MCF 10A (cell line): ENCODE measurements at regions of chr13 and their contacts with region 1.

Region 1: DNA sequence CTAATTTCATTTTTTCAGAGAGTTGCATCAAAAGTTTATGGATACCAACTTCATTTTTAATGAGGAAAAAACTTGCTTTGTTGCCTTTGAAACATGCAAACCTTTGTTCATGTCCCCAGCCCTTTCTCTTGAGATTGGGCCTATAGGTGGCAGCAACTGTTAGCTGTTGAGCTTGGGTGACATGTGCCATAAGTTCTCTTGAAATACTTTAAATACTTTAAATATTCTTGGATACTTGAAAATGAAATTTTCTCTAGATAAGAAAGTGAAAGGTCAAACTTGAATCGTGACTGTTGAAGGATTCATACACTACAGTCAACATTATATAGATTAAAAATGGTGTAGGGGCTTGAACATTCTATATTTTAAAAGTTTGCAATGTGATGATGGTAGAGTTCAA is 294.9 kb downstream of the NDFIP2 start:
- DNase-seq: peak; percentile 58
- H3K4me3 Mint-ChIP-seq: no peak overlapping the region
- H3K27ac Mint-ChIP-seq: no peak overlapping the region
- H3K4me1 Mint-ChIP-seq: peaks cover 20% of the 10 kb centered on the region
- H3K27me3 Mint-ChIP-seq: no peaks in the 10 kb centered on the region
- CTCF ChIP-seq: peak; percentile 53

Region 2: DNA sequence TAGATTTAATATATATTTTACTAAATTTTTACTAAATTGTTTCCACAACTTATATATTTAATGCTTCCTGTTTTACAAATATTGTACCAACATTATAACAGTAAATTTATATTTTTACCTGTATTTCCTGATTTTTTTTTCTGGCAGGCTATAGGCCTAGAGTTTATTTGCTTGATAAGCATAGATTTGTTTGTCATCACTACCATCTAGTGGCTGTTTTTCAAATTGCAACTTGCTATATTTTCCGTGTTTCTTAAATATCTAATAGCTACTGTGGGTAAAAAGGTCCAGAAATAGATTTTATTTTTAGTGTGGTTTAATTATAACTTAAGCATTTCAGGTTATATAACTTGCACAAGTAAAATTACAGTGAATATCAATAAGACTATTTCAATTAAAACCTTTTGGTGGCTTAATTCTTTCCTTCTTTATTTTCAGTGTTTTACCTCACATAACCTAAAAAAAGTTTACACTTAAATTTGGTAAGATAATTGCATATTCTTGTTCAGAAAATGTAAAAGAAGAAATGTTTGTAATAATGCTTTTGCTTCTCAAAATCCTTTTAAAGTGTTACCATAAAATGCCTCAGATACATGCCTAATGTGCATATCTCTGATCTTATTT is 234.3 kb before region 1 on chr13:
- CTCF ChIA-PET with region 1: interaction called, 3 read pairs
- POLR2A ChIA-PET with region 1: no interaction called
- intact Hi-C with region 1: loop called (anchors 10 kb)
- DNase-seq: peak; percentile 66
- H3K4me3 Mint-ChIP-seq: no peak overlapping the region
- H3K27ac Mint-ChIP-seq: no peak overlapping the region
- H3K4me1 Mint-ChIP-seq: no peaks in the 10 kb centered on the region
- H3K27me3 Mint-ChIP-seq: no peaks in the 10 kb centered on the region
- CTCF ChIP-seq: peak; percentile 73

Region 3: GRCh38 chr13:79936368-79937136 is 160.7 kb after region 1 on chr13:
- CTCF ChIA-PET with region 1: no interaction called
- POLR2A ChIA-PET with region 1: interaction called, 3 read pairs
- intact Hi-C with region 1: loop called (anchors 2 kb)
- DNase-seq: peak; percentile 93
- H3K4me3 Mint-ChIP-seq: peak overlapping the region; percentile 37
- H3K27ac Mint-ChIP-seq: peak overlapping the region; percentile 99
- H3K4me1 Mint-ChIP-seq: peaks cover 27% of the 10 kb centered on the region
- H3K27me3 Mint-ChIP-seq: no peaks in the 10 kb centered on the region
- CTCF ChIP-seq: no peak

Region 4: DNA sequence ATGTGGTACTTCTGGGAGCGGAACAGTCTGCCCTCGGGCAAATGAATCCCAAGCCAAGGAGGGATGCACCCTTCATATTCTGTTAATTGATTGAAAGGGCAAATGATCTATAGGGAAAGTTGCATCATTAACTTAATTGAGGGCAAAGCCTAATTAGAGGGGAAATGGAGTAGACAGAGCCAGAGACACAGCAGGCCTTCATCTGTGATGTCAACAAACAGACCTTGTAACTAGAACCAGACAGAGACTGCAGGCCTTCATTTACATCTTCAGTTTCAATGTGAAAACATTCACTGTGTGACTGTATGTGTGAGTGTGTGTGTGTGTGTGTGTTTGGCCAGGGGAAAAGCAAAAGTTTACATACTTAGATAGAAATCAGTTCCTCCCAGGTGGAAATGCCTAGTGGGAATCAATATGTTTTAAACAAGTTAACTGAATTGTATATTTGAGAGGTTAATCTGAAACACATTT is 438.7 kb after region 1 on chr13:
- CTCF ChIA-PET with region 1: no interaction called
- POLR2A ChIA-PET with region 1: no interaction called
- intact Hi-C with region 1: no loop called
- DNase-seq: no peak
- H3K4me3 Mint-ChIP-seq: no peak overlapping the region
- H3K27ac Mint-ChIP-seq: no peak overlapping the region
- H3K4me1 Mint-ChIP-seq: no peaks in the 10 kb centered on the region
- H3K27me3 Mint-ChIP-seq: no peaks in the 10 kb centered on the region
- CTCF ChIP-seq: no peak

Region 5: DNA sequence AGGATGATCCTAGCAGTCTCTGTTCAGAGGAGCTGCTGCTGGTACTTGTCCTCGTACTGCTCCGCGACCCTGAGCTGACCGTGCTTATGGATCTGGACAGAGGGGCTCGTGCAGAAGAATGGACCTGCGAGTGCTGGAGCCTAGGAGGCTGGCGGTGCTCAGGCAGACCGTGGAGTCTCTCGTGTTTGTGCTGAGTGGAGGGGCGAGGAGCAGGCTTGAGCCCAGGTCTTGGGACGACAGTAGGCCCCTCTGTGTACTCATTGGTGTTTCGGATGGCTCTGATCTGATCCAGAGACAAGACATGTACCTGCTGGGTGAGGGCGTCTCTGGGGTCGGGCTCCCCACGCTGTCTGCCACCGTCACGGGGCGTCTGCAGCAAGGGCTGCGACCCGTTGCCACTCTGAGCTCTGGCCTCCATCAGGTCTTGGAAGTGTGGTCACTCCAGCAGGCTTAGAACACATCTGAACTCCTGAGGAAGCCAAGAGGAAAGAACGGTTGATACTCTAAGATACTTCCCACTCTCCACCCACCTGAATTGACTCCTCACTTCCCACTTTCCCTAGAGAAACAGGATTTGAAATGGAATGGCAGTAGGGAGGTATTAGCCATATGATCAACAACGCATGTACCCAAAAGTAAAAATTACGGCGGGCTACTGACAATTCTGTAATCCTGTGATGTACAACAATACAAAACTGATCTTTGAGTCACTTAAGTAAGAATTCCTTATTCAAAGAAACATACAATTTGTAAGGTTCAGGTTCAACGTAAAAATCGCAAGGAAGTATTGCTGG is 561.7 kb after region 1 on chr13:
- CTCF ChIA-PET with region 1: interaction called, 7 read pairs
- POLR2A ChIA-PET with region 1: interaction called, 18 read pairs
- intact Hi-C with region 1: loop called (anchors 1 kb)
- DNase-seq: peak; percentile 23
- H3K4me3 Mint-ChIP-seq: no peak overlapping the region
- H3K27ac Mint-ChIP-seq: no peak overlapping the region
- H3K4me1 Mint-ChIP-seq: peaks cover 25% of the 10 kb centered on the region
- H3K27me3 Mint-ChIP-seq: no peaks in the 10 kb centered on the region
- CTCF ChIP-seq: no peak

Region 6: DNA sequence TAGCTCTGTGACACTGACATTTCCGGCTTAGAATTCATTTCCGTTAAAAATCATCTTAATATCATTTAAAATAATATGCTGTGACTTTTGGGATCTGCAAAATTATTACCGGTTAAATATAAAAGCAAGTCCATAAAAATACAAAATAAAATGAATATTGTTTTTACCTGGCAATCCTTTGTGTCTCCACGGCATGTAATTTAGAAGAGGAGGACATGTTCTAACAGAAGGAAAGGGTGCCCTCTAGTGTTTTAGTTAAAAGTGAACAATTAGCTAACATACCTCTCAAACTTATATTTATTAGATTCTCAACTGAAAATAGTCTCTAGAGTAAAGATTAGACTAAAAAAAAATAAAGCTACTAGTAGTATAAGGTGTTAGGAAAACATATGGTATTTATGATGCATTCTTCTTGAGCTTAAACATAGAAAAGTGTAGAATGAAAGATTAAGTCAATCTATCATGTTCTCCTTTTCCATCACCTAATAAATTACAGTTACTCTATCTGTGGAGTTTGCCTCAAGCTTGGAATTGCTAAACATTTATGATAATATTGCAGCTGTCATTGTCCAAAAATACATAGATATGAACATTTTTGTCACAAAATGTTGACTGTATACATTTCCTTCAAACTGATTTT is 1241.8 kb after region 1 on chr13:
- CTCF ChIA-PET with region 1: interaction called, 3 read pairs
- POLR2A ChIA-PET with region 1: no interaction called
- intact Hi-C with region 1: loop called (anchors 1 kb)
- DNase-seq: peak; percentile 61
- H3K4me3 Mint-ChIP-seq: no peak overlapping the region
- H3K27ac Mint-ChIP-seq: no peak overlapping the region
- H3K4me1 Mint-ChIP-seq: no peaks in the 10 kb centered on the region
- H3K27me3 Mint-ChIP-seq: no peaks in the 10 kb centered on the region
- CTCF ChIP-seq: peak; percentile 39